CD8-positive, alpha-beta memory T cell (primary cell): ENCODE measurements at regions of chr10 and their contacts with region 1.

Region 1: DNA sequence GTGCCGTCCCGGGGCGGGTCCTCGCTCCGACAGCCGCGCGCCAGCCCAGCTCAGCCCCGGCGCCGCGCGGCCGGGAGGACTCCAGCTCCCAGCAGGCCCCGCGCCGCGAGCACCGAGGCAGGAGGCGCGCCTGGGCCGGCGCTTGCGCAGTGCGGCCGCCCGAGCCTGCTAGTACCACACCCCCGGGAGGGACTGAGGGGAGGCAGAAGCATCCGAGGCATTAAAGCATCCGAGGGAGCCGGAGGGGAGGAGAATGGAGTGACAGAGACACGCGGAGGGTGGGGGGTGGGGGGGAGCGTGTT is at the start of gene GRK5:
- DNase-seq: peak; percentile 92 to 98 (median 98)
- H3K4me3 ChIP-seq: peak within 1 kb of the TSS; percentile 78
- H3K4me3 Mint-ChIP-seq: peak within 1 kb of the TSS; percentile 94 to 99 (median 96)
- H3K27ac ChIP-seq: peak within 1 kb of the TSS; percentile 57
- H3K27ac Mint-ChIP-seq: peak within 1 kb of the TSS; percentile 93 to 99 (median 98)
- H3K4me1 ChIP-seq: peaks cover 34% of the 10 kb centered on the region
- H3K4me1 Mint-ChIP-seq: peaks cover 39 to 49% (median 46%) of the 10 kb centered on the region in 3 donors
- H3K27me3 ChIP-seq: no peaks in the 10 kb centered on the region
- H3K27me3 Mint-ChIP-seq: peaks cover 0 to 2% of the 10 kb centered on the region in 2 donors
- total RNA-seq, gene GRK5: 13.6 to 13.8 TPM

Region 2: GRCh38 chr10:119098576-119098975 is 108.7 kb before region 1 on chr10:
- CTCF ChIA-PET with region 1: no interaction called
- POLR2A ChIA-PET with region 1: no interaction called
- DNase-seq: no peak
- H3K4me3 ChIP-seq: no peak overlapping the region
- H3K4me3 Mint-ChIP-seq: no peak overlapping the region
- H3K27ac ChIP-seq: no peak overlapping the region
- H3K27ac Mint-ChIP-seq: peak overlapping the region in 2 of 8 donors; percentile 29 to 70
- H3K4me1 ChIP-seq: peaks cover 9% of the 10 kb centered on the region
- H3K4me1 Mint-ChIP-seq: peaks cover 19 to 43% (median 40%) of the 10 kb centered on the region in 3 donors
- H3K27me3 ChIP-seq: no peaks in the 10 kb centered on the region
- H3K27me3 Mint-ChIP-seq: no peaks in the 10 kb centered on the region

Region 3: DNA sequence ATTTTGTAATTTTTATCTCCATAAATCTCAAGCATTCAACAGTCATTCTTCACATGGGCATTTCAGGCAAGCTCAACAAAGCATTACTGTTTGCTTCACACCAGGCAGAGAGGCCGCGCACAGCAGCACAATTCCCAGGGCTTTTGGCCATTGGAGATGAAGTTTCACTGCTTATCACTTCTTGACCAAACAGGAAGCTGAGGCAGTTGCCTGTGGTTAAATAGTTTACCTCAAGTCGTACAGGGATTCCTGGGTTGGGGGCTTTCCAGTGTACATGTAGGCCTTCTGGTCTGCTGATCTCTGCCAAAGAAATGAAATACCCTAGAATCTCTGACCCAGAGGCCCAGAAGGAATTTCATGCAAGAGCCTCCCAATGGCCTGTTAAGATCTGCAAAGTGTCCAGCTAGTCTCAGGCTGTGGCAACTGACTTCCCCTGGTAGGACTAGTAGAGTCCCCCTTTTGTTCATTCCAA is 17.5 kb before region 1 on chr10:
- CTCF ChIA-PET with region 1: interaction called, 11 read pairs
- POLR2A ChIA-PET with region 1: no interaction called
- DNase-seq: no peak
- H3K4me3 ChIP-seq: no peak overlapping the region
- H3K4me3 Mint-ChIP-seq: no peak overlapping the region
- H3K27ac ChIP-seq: no peak overlapping the region
- H3K27ac Mint-ChIP-seq: peak overlapping the region in 2 of 8 donors; percentile 17 to 46
- H3K4me1 ChIP-seq: peaks cover 6% of the 10 kb centered on the region
- H3K4me1 Mint-ChIP-seq: peaks cover 6 to 15% (median 9%) of the 10 kb centered on the region in 3 donors
- H3K27me3 ChIP-seq: no peaks in the 10 kb centered on the region
- H3K27me3 Mint-ChIP-seq: no peaks in the 10 kb centered on the region

Region 4: GRCh38 chr10:119296703-119297102 is 89.4 kb after region 1 on chr10:
- CTCF ChIA-PET with region 1: interaction called, 112 read pairs
- POLR2A ChIA-PET with region 1: interaction called, 3 read pairs
- DNase-seq: no peak
- H3K4me3 ChIP-seq: no peak overlapping the region
- H3K4me3 Mint-ChIP-seq: no peak overlapping the region
- H3K27ac ChIP-seq: no peak overlapping the region
- H3K27ac Mint-ChIP-seq: peak overlapping the region in 3 of 8 donors; percentile 26 to 90 (median 66)
- H3K4me1 ChIP-seq: peaks cover 57% of the 10 kb centered on the region
- H3K4me1 Mint-ChIP-seq: peaks cover 49 to 56% (median 56%) of the 10 kb centered on the region in 3 donors
- H3K27me3 ChIP-seq: no peaks in the 10 kb centered on the region
- H3K27me3 Mint-ChIP-seq: no peaks in the 10 kb centered on the region

Region 5: DNA sequence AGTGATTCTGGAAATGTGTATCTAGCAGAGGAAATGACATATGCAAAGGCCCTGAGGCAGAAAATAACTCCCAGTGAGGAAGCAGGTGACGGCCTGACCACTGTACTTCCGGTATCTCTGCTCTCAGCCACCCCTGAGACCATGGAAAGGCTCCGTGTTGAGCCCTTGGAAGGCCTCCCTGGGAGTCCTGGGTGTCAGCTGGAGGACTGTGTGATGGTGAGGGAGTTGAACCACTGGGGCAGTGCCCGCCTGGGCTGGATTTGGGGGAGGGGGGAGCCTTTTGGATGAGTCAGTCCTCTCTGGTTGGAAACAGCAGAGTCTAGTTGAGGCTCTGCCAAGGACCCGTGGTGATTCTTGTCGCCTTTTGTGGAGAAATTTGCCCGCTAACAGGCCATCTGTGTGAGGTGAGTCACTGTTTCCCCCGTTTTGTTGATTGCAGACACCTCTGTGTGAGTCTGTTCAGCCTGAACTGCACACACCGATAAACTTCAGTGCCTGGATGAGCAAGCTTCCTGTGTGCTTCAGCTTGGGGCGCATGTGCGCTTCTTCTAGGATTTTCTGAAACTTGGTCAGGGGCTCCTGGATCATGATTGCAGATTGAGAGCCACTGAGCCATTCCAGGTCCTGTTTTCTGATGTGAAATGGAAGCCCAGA is 98.7 kb after region 1 on chr10:
- CTCF ChIA-PET with region 1: interaction called, 112 read pairs
- POLR2A ChIA-PET with region 1: interaction called, 18 read pairs
- DNase-seq: peak; percentile 68 to 96 (median 74)
- H3K4me3 ChIP-seq: peak overlapping the region; percentile 70
- H3K4me3 Mint-ChIP-seq: peak overlapping the region; percentile 73 to 95 (median 90)
- H3K27ac ChIP-seq: peak overlapping the region; percentile 83
- H3K27ac Mint-ChIP-seq: peak overlapping the region; percentile 92 to 98 (median 98)
- H3K4me1 ChIP-seq: peaks cover 66% of the 10 kb centered on the region
- H3K4me1 Mint-ChIP-seq: peaks cover 61 to 79% (median 64%) of the 10 kb centered on the region in 3 donors
- H3K27me3 ChIP-seq: no peaks in the 10 kb centered on the region
- H3K27me3 Mint-ChIP-seq: peaks cover 0 to 7% of the 10 kb centered on the region in 2 donors

Region 6: GRCh38 chr10:119416855-119417254 is 209.5 kb after region 1 on chr10:
- CTCF ChIA-PET with region 1: interaction called, 30 read pairs
- POLR2A ChIA-PET with region 1: no interaction called
- DNase-seq: peak; percentile 49 to 74 (median 52)
- H3K4me3 ChIP-seq: no peak overlapping the region
- H3K4me3 Mint-ChIP-seq: no peak overlapping the region
- H3K27ac ChIP-seq: no peak overlapping the region
- H3K27ac Mint-ChIP-seq: peak overlapping the region in 1 of 8 donors; percentile 57
- H3K4me1 ChIP-seq: no peaks in the 10 kb centered on the region
- H3K4me1 Mint-ChIP-seq: no peaks in the 10 kb centered on the region
- H3K27me3 ChIP-seq: no peaks in the 10 kb centered on the region
- H3K27me3 Mint-ChIP-seq: no peaks in the 10 kb centered on the region

Region 7: DNA sequence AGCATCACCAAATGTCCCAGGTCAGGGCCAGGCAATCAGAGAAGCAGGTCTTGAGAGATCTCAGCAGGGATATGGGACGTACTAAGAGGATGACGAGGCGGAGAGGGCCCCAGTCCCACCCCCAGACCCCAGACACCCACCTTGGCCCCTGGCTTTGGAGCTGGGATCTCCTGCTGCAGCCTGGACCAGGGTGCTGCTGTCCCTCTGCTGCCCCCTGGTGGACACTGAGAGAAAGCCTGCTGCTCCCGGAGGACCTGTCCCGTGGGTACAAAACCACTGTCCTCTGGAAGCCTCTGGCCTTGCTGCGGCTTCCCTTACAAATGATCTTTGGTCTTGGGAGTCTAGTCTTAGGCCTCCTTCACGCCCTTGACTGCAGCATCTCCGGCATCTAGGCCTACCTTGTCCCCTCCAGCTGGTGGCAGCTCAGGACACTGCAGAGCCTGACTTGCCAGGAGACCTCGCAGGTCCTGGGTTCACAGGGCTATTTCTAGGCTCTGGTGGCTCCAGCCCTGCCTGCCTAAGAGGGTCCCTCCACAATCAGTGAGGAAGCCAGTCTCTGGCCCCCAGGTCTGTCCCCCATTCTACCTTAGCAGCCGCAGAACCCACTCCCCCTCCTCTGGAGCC is 238.1 kb after region 1 on chr10:
- CTCF ChIA-PET with region 1: interaction called, 29 read pairs
- POLR2A ChIA-PET with region 1: interaction called, 4 read pairs
- DNase-seq: peak; percentile 71 to 87 (median 78)
- H3K4me3 ChIP-seq: no peak overlapping the region
- H3K4me3 Mint-ChIP-seq: no peak overlapping the region
- H3K27ac ChIP-seq: no peak overlapping the region
- H3K27ac Mint-ChIP-seq: peak overlapping the region in 3 of 8 donors; percentile 32 to 47 (median 36)
- H3K4me1 ChIP-seq: peaks cover 4% of the 10 kb centered on the region
- H3K4me1 Mint-ChIP-seq: peaks cover 8 to 14% (median 9%) of the 10 kb centered on the region in 3 donors
- H3K27me3 ChIP-seq: no peaks in the 10 kb centered on the region
- H3K27me3 Mint-ChIP-seq: no peaks in the 10 kb centered on the region